Endothelial cell of umbilical vein (primary cell): ENCODE measurements at regions of chr14 and their contacts with region 1.

Region 1: GRCh38 chr14:75783184-75783583 is 122.1 kb downstream of the TTLL5 start:
- DNase-seq: no peak
- H3K4me3 ChIP-seq: no peak overlapping the region
- H3K27ac ChIP-seq: no peak overlapping the region
- H3K4me1 ChIP-seq: peaks cover 3% of the 10 kb centered on the region
- H3K27me3 ChIP-seq: no peaks in the 10 kb centered on the region
- CTCF ChIP-seq: no peak
- POLR2A ChIP-seq: no peak

Region 2: DNA sequence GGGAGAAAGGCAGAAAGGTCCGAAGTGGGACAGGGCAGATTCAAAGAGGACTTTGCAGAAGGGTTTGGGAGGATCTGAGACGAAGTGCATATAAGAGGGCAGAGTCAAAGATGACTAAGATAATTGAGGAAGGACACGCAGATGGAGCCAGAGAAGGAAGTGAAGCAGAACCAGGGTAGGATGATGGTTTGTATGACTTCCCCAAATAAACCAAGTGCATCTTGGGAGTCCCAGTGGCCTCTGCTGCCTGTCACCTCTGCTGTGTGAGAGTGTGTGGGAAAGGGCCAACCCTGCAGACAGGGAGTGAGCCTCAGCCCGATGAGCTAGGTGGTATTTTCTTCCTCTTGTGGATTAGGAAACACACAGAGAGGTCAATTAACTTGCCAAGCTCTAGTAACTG is 168.0 kb before region 1 on chr14:
- CTCF ChIA-PET with region 1: no interaction called
- POLR2A ChIA-PET with region 1: no interaction called
- dilution Hi-C with region 1: no loop called
- intact Hi-C with region 1: no loop called
- DNase-seq: no peak
- H3K4me3 ChIP-seq: no peak overlapping the region
- H3K27ac ChIP-seq: no peak overlapping the region
- H3K4me1 ChIP-seq: no peaks in the 10 kb centered on the region
- H3K27me3 ChIP-seq: peaks cover 5 to 13% of the 10 kb centered on the region in 2 experiments
- CTCF ChIP-seq: no peak
- POLR2A ChIP-seq: no peak

Region 3: DNA sequence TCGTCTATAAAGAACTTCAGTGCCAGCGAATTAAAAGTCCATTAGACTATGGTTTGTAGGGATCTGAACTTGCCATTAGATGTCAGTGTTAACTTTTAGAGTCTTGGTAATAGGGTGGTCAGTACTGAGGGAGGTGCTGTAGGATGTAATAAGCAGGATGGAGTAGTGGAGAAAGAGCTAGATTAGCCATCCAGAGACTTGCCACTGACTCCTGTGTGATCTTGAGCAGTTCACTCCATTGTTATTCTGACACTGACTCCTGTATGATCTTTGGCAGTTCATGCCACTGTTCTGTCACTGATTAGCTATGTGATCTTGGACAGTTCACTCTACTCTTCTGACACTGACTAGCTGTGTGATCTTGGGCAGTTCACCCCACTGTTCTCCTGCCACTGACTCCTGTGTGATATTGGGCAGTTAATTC is 11.4 kb after region 1 on chr14:
- CTCF ChIA-PET with region 1: interaction called, 10 read pairs
- POLR2A ChIA-PET with region 1: no interaction called
- dilution Hi-C with region 1: no loop called
- intact Hi-C with region 1: no loop called
- DNase-seq: peak; percentile 49
- H3K4me3 ChIP-seq: no peak overlapping the region
- H3K27ac ChIP-seq: no peak overlapping the region
- H3K4me1 ChIP-seq: no peaks in the 10 kb centered on the region
- H3K27me3 ChIP-seq: no peaks in the 10 kb centered on the region
- CTCF ChIP-seq: peak in 1 of 2 donors; percentile 31
- POLR2A ChIP-seq: no peak